Activated CD4-positive, alpha-beta T cell treated with anti-CD3 and anti-CD28 coated beads for 36 hours (primary cell): ENCODE measurements at regions of chr10 and their contacts with region 1.

Region 1: DNA sequence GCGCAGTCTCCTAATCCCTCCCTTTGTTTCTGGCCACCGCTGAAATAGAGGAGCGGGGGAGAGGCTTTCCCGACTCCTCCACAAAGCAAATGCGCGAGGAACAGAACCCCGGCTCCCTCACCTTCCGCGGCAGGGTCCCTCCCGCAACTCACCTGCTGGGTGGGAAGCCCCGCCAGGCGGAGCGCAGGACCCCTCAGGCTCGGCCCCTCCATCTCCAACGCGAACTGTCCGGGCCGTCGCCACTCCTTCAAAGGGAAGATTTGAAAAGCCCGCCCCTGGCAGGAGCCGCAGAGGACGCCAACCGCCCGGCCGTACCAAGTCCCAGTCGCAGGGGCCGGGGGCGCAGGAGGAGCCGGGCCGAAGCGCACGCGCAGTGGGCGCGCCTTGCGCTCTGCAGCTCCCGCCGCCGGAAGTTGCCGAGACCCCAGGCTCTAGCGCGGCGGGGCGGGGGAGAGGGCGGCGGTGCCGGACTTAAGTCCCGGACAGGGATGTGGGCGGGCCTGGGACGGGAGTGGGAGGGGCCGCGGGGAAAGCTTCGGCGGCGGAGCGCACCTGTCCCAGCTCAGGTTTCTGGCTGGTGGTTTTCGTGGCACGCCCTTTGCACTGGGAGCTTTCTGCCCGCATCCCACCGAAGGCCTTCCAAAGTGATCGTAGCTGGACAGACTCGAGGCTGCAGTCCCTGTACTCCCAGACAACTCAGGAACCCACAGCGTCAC is at the start of gene RTKN2:
- DNase-seq: peak; percentile 83
- ATAC-seq: peak; percentile 88
- H3K4me3 Mint-ChIP-seq: peak within 1 kb of the TSS; percentile 82
- H3K27ac Mint-ChIP-seq: peak within 1 kb of the TSS; percentile 51
- H3K4me1 Mint-ChIP-seq: peaks cover 14% of the 10 kb centered on the region
- H3K27me3 Mint-ChIP-seq: peaks cover 31% of the 10 kb centered on the region
- total RNA-seq, gene RTKN2: 4.8 TPM

Region 2: GRCh38 chr10:62250594-62251198 is 17.9 kb before region 1 on chr10:
- CTCF ChIA-PET with region 1: interaction called, 22 read pairs
- POLR2A ChIA-PET with region 1: no interaction called
- intact Hi-C with region 1: no loop called
- DNase-seq: no peak
- ATAC-seq: peak; percentile 53
- H3K4me3 Mint-ChIP-seq: no peak overlapping the region
- H3K27ac Mint-ChIP-seq: no peak overlapping the region
- H3K4me1 Mint-ChIP-seq: peaks cover 32% of the 10 kb centered on the region
- H3K27me3 Mint-ChIP-seq: no peaks in the 10 kb centered on the region

Region 3: GRCh38 chr10:62373995-62374861 is 105.7 kb after region 1 on chr10 and contains the start of gene ZNF365:
- CTCF ChIA-PET with region 1: interaction called, 4 read pairs
- POLR2A ChIA-PET with region 1: no interaction called
- intact Hi-C with region 1: loop called in 1 of 2 experiments (anchors 5 kb)
- DNase-seq: peak; percentile 70
- ATAC-seq: peak; percentile 92
- H3K4me3 Mint-ChIP-seq: peak within 1 kb of the TSS; percentile 69
- H3K27ac Mint-ChIP-seq: no peak within 1 kb of the TSS
- H3K4me1 Mint-ChIP-seq: peaks cover 7% of the 10 kb centered on the region
- H3K27me3 Mint-ChIP-seq: peaks cover 29% of the 10 kb centered on the region
- total RNA-seq, gene ZNF365: 0.09 to 0.32 TPM